ENCODE measurements at regions of chr2 and their contacts with region 1.

Region 1: DNA sequence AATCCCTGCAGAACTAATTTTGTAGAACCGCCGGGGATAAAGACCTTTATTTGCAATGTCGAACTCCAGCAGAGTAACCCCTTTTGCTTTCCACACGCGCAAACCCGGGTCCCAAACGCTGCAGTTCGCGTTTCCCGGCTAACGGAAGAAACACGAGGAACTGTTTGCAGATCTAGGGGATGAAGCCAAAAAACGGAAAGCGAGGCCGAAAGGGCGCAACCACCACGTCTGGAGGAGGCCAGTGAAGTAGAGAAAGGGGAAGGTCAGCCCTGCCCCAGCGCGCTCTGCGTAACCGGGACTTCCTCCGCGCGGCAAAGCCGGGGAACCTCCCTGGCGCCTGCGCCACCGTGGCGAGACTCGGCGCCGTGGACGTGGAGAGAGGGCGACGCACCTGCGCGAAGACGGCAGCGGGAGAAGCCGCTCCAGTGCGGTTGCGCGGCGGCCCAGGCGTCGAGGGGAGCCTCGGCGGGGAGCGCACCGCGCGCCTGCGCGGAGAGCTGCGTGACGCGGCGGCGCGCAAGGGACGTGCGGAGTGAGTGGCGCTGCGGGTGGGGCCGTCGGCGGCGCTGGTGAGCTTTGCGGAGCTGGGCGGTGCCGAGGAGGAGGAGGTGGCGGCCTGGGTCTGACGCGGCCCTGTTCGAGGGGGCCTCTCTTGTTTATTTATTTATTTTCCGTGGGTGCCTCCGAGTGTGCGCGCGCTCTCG is at the start of gene PPP1CB:
- DNase-seq: peak; percentile 99
- H3K4me3 Mint-ChIP-seq: peak within 1 kb of the TSS; percentile 98
- H3K27ac Mint-ChIP-seq: peak within 1 kb of the TSS; percentile 98
- H3K4me1 Mint-ChIP-seq: peaks cover 54% of the 10 kb centered on the region
- H3K27me3 Mint-ChIP-seq: no peaks in the 10 kb centered on the region
- total RNA-seq, gene PPP1CB: 246 and 251 TPM in 2 replicates

Region 2: DNA sequence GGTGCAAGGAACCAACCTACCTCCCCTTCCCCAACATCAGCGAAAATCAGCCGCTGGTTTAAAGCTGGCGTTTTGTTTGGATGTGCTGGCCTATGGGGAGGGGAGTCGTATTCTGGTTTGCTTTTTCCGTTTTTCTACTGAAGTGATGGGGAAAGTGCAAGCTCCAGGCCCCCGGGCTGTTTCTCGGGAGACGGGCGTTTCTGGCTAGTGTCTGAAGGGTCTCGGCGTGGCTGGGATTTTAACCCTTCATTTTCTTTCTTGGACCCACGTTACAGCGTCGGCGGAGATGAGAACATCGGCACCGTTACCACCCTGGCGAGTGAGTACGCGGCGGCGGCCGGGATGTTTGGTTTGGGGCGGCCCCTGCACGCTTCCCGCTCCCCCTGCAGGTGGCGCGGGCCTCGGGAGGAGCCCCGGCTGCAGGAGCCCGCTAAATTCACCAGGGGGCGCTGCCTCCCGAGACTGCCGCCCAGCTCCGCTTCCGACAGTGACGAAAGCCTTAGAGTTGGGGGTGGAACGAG is 184.8 kb before region 1 on chr2:
- intact Hi-C with region 1: loop called (anchors 1 kb)
- DNase-seq: peak; percentile 97
- H3K4me3 Mint-ChIP-seq: peak overlapping the region; percentile 86
- H3K27ac Mint-ChIP-seq: peak overlapping the region; percentile 72
- H3K4me1 Mint-ChIP-seq: peaks cover 17% of the 10 kb centered on the region
- H3K27me3 Mint-ChIP-seq: peaks cover 7% of the 10 kb centered on the region

Region 3: DNA sequence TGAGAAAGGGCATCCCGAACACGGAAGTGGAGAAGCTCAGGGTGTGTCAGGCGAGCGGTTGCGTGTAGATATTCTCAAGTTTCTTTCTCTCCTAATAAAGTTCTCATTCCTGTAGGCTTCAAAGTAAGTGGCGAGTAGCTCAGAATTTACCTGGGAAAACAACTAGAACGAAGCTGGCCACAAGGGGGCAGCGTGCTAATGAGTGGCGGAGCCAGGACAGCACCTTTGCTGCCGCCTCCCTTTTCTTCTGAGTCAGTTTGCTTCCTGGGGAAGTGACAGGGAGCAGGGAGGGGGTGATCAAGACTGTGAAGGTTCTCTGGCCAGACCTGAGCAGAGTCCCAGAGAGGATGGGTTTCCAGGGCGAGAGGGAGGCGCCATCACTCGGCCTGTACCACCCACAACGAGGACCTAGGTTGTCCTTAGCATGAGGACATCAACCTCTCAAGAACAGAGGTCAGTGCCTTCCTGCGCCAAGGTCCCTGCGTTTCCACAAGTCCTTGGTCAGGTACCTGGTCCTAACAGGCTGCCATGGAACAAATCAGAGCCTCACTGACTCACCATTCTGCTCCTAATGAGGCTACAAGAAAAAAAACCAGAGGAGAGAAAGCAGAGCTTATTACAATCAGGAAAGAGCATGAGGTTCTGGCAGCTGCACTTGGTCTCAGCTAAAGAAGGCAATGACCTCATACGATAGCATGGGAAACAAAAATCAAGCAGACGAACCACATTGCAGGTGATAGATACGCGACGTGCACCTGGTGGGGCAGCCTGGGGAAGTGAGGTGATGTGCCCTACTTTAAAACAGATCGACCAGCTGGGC is 156.9 kb before region 1 on chr2:
- intact Hi-C with region 1: loop called (anchors 1 kb)
- DNase-seq: peak; percentile 95
- H3K4me3 Mint-ChIP-seq: peak overlapping the region; percentile 50
- H3K27ac Mint-ChIP-seq: peak overlapping the region; percentile 84
- H3K4me1 Mint-ChIP-seq: peaks cover 18% of the 10 kb centered on the region
- H3K27me3 Mint-ChIP-seq: no peaks in the 10 kb centered on the region

Region 4: GRCh38 chr2:28621172-28622100 is 130.0 kb before region 1 on chr2:
- intact Hi-C with region 1: loop called (anchors 1 kb)
- DNase-seq: peak; percentile 95
- H3K4me3 Mint-ChIP-seq: peak overlapping the region; percentile 65
- H3K27ac Mint-ChIP-seq: peak overlapping the region; percentile 97
- H3K4me1 Mint-ChIP-seq: peaks cover 88% of the 10 kb centered on the region
- H3K27me3 Mint-ChIP-seq: no peaks in the 10 kb centered on the region

Region 5: DNA sequence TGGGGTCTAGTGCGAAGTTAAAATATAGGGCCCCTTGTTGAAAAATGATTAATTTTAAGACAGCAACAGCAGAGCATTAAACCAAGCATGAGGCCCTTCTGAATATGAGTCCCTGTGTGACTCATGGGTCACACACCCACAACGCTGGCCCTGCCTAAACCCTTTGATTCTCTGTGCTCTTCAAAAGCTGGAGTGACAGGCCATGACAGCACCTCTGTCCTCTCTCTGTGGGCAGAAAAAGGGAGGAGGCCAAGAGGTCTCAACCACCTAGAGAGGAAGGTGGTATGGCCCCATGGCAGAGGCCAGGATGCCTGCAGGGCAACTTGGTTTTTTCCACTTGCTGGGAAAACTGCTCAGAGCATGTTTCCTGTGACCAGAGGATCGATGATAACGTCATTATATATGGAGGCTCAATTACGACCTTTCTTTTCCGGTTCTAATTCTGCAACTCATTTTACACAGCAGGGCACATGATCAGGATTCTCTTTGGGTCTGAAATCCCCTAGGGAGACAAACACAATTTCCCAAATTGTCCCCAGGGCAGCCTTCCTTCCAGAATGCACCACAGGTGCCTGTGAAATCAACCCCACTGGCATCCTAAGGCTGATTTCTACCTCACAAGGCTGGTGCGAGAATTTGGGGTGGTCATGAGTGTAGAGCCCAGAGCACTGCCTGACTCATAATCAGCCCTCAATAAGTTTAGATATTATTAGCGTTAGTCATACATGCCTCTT is 101.8 kb before region 1 on chr2:
- intact Hi-C with region 1: loop called (anchors 1 kb)
- DNase-seq: peak; percentile 65
- H3K4me3 Mint-ChIP-seq: peak overlapping the region; percentile 33
- H3K27ac Mint-ChIP-seq: peak overlapping the region; percentile 80
- H3K4me1 Mint-ChIP-seq: peaks cover 30% of the 10 kb centered on the region
- H3K27me3 Mint-ChIP-seq: no peaks in the 10 kb centered on the region

Region 6: DNA sequence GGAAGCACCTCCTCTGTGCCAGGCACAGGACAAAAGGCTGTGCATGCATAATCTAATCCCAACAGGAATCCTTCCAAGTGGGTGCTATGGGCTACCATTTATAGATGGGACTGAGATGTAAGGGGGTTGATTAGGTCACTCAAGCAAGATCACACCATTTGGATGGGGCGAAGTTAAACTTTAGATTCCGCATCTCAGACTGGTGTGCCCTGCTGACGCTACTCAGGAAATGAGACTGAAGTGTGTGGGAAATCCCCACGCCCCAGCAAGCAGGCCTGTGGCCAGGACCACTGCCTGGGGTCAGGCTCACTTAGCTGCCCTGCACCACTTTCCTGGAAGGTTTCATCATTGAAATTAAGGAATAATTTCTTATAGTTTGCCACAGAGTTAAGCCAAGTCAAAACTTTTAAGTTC is 70.2 kb before region 1 on chr2:
- intact Hi-C with region 1: loop called (anchors 1 kb)
- DNase-seq: peak; percentile 90
- H3K4me3 Mint-ChIP-seq: peak overlapping the region; percentile 73
- H3K27ac Mint-ChIP-seq: peak overlapping the region; percentile 97
- H3K4me1 Mint-ChIP-seq: peaks cover 60% of the 10 kb centered on the region
- H3K27me3 Mint-ChIP-seq: no peaks in the 10 kb centered on the region

Region 7: GRCh38 chr2:28894470-28895177 is 143.2 kb after region 1 on chr2 and contains the start of gene WDR43:
- intact Hi-C with region 1: loop called (anchors 2 kb)
- DNase-seq: peak; percentile 100
- H3K4me3 Mint-ChIP-seq: peak within 1 kb of the TSS; percentile 99
- H3K27ac Mint-ChIP-seq: peak within 1 kb of the TSS; percentile 95
- H3K4me1 Mint-ChIP-seq: peaks cover 32% of the 10 kb centered on the region
- H3K27me3 Mint-ChIP-seq: no peaks in the 10 kb centered on the region
- total RNA-seq, gene WDR43: 181 and 190 TPM in 2 replicates